Left lung (tissue), 14 donors: ENCODE measurements at regions of chr15 and their contacts with region 1.

Region 1: DNA sequence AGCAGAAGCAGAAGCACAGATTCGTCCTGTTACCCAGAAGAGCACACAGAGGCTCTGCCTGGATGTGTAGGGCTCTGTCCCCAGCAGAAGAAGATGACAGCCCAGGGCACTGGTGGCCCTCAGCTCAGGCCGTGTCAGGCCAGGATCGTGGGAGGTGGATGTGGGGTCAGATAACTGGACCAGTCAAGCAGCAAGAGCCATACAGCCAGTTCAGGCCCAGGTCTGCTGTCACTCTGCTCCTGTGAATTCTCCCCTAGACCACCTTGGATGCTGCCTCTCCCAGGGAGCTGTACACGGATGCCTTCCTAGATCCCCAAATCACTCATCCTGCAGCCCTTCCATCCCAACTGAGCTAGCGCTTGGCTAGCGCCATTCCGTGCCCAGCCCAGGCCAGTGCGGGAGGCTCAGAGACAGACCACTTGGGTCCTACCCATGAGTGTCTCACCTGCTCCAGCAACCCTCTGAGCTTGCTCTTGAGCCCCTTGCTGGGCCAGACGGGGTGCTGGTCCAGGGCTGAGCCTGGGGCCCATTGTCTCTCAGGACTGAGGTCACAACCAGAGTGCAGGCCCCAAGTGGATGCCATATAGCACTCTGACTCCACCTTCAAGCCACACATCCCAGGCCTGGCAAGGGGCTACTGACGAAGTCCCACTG is 17.6 kb downstream of the SH2D7 start:
- DNase-seq: peak in 1 of 4 donors; percentile 24
- ATAC-seq: no peak
- H3K4me3 ChIP-seq: no peak overlapping the region
- H3K27ac ChIP-seq: no peak overlapping the region
- H3K4me1 ChIP-seq: peaks cover 0 to 12% of the 10 kb centered on the region in 2 donors
- H3K27me3 ChIP-seq: no peaks in the 10 kb centered on the region
- CTCF ChIP-seq: no peak

Region 2: GRCh38 chr15:78195735-78196201 is 85.8 kb after region 1 on chr15:
- intact Hi-C with region 1: loop called in 1 of 2 experiments (anchors 5 kb)
- DNase-seq: peak in 1 of 4 donors; percentile 40
- ATAC-seq: peak; percentile 91
- H3K4me3 ChIP-seq: no peak overlapping the region
- H3K27ac ChIP-seq: no peak overlapping the region
- H3K4me1 ChIP-seq: no peaks in the 10 kb centered on the region
- H3K27me3 ChIP-seq: no peaks in the 10 kb centered on the region
- CTCF ChIP-seq: peak; percentile 62 to 73

Region 3: DNA sequence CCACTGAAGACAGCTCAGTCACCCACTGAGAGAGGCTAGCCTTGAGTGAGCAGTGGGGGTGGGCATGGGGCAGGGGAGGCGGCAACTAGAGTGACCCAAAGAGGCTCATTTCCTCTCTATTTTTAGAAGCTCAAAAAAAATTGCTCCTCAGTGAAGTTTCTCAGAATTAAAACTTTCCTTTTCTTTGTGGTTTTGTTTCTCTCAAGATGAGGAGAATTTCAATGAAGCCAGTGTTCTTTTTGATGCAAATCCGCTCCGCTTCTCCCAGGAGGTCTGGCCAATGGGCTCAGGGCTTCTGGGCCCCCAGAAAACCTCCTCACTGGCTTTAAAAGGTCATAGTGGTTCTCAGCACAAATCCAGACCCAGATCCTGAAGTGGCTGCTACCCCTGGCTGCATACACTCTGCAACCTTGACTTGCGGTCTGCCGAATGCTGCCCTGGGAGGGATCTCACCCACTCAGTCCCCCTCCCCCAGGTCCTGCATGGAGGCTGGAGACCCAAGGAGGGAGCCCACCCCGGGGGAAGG is 124.6 kb after region 1 on chr15 and contains the start of gene ACSBG1:
- intact Hi-C with region 1: loop called in 1 of 2 experiments (anchors 5 kb)
- DNase-seq: no peak
- ATAC-seq: no peak
- H3K4me3 ChIP-seq: no peak within 1 kb of the TSS
- H3K27ac ChIP-seq: no peak within 1 kb of the TSS
- H3K4me1 ChIP-seq: no peaks in the 10 kb centered on the region
- H3K27me3 ChIP-seq: no peaks in the 10 kb centered on the region
- CTCF ChIP-seq: no peak
- polyA plus RNA-seq, gene ACSBG1: 0.42 to 1.4 (median 0.74) TPM

Region 4: DNA sequence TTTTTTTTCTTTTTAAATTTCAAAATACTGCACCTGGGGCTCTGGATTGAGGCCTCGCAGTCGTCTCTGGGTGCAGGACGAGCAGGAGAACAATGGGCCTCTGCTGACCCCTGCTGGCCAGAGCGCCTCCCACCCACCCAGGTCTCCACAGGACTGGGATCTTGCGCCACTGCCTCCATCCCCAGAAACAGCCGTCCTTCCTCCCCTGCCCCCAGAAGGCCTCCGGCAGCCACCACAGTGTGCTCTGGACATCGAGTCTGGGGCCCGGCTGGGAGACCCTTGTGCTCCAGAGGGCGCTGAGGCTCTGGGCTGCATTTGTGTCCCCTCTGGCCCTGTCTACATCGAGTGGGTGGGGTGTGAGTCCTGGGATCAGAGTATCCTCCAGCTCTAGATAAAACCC is 131.0 kb after region 1 on chr15:
- intact Hi-C with region 1: loop called (anchors 5 kb)
- DNase-seq: peak; percentile 69 to 95 (median 84)
- ATAC-seq: peak; percentile 99
- H3K4me3 ChIP-seq: no peak overlapping the region
- H3K27ac ChIP-seq: no peak overlapping the region
- H3K4me1 ChIP-seq: peaks cover 0 to 6% of the 10 kb centered on the region in 2 donors
- H3K27me3 ChIP-seq: peaks cover 0 to 4% of the 10 kb centered on the region in 2 donors
- CTCF ChIP-seq: peak; percentile 81 to 92